ENCODE measurements at regions of chr2 and their contacts with region 1.

Region 1: GRCh38 chr2:74540291-74540690 is 10.6 kb downstream of the HTRA2 start:
- DNase-seq: no peak
- H3K4me3 Mint-ChIP-seq: no peak overlapping the region
- H3K27ac Mint-ChIP-seq: no peak overlapping the region
- H3K4me1 Mint-ChIP-seq: peaks cover 10% of the 10 kb centered on the region
- H3K27me3 Mint-ChIP-seq: peaks cover 43% of the 10 kb centered on the region

Region 2: GRCh38 chr2:74529357-74530238 is 10.7 kb before region 1 on chr2 and contains the starts of genes AUP1 and HTRA2:
- CTCF ChIA-PET with region 1: interaction called, 16 read pairs
- POLR2A ChIA-PET with region 1: no interaction called
- DNase-seq: peak; percentile 92
- H3K4me3 Mint-ChIP-seq: peak within 1 kb of the TSS; percentile 98
- H3K27ac Mint-ChIP-seq: peak within 1 kb of the TSS; percentile 97
- H3K4me1 Mint-ChIP-seq: peaks cover 57% of the 10 kb centered on the region
- H3K27me3 Mint-ChIP-seq: no peaks in the 10 kb centered on the region
- total RNA-seq, gene AUP1: 116 to 136 TPM
- total RNA-seq, gene HTRA2: 41.6 to 45.8 TPM

Measured in activated CD4-positive, alpha-beta T cell treated with anti-CD3 and anti-CD28 coated beads, Interleukin-2, amount 10 ng/mL, durations not matched to agents 7 days and 5 days (primary cell).